ENCODE measurements at regions of chr6 and their contacts with region 1.

Region 1: GRCh38 chr6:160455541-160456213 is 107.5 kb downstream of the SLC22A3 start:
- DNase-seq: peak; percentile 40 to 94 (median 72)

Region 2: GRCh38 chr6:160088069-160088783 is 367.5 kb before region 1 on chr6:
- intact Hi-C with region 1: loop called (anchors 1 kb)
- DNase-seq: peak in 9 of 10 donors; percentile 21 to 92 (median 66)

Region 3: DNA sequence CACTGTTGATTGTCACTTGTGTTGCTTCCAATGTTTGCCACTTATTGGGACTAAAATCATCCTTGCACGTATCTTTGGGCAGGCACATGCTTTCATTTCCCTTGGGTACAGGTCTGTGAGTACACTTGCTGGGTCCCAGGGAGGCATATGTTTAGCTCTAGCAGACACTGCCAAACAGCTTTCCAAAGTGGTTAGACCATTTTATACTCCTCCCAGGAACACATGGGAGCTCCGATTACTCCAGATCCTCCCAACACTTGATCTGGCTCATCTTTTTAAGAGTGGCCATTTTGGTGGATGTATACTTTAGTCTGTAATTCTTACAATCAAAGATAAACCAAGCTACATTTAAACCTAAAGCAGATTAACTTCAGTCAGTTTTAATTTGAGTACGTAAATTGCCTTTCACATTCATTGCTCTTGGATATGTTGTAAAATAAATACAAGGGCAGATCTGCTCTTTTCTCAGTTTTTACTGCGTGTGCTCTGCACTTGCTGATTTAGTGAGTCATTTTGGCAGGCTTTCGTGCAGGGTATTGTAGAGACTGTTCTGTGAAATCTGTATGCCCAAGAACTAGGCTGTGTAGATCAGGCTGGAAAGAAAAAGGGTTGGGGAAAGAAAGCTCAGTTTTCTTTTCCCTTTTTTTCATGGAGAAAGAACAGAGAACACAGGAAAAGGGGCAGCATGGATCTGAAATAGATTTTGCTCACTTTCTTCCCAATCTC is 314.5 kb before region 1 on chr6:
- intact Hi-C with region 1: loop called (anchors 2 kb)
- DNase-seq: no peak

Region 4: DNA sequence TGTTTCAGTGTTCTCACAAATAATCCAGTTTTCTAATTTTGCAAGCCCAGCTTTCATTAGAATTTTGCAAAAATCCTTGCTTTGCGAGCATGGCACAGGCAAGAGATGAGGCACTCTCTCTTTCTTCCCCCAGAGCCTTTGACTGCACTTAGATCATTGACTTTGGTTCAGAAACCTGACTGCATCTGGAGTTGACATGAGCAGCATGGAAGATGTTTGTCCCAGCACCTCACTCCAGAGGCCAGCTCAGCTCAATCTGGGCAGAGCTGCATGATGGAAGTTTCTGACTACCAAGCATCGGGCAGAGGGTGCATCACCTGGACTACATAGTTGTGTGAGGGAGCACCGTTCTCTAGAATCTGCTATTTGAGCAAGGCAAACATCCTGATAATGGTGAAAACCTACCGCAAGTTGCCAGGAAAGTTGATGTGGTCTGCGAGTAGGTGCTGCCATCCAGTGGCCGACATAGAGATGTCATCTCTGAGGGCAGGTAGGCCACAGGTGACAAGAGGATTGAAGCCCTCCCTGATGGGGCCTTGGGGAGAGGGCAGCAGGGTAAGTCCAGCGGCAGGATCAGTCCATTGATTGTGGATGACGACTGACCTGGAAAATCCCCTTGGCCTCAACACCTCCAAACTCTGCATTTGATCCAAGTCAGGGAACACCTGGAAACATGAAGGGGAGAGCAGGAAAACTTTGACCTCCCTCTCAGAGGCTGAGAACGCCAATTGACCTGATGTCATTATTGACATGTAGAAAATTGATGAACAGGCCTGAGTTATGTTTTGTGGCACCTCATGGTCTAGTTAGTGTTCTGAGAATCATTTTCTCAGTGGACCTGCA is 212.2 kb after region 1 on chr6:
- intact Hi-C with region 1: no loop called
- DNase-seq: no peak